Psoas muscle (tissue), 8 donors: ENCODE measurements at regions of chr3 and their contacts with region 1.

Region 1: GRCh38 chr3:142356818-142357217 is 91.0 kb downstream of the XRN1 start:
- DNase-seq: no peak
- ATAC-seq: no peak
- H3K4me3 ChIP-seq: no peak overlapping the region
- H3K27ac ChIP-seq: no peak overlapping the region
- H3K4me1 ChIP-seq: no peaks in the 10 kb centered on the region
- H3K27me3 ChIP-seq: no peaks in the 10 kb centered on the region
- CTCF ChIP-seq: no peak

Region 2: GRCh38 chr3:142394921-142395622 is 38.3 kb after region 1 on chr3:
- intact Hi-C with region 1: loop called (anchors 5 to 10 kb)
- DNase-seq: no peak
- ATAC-seq: no peak
- H3K4me3 ChIP-seq: no peak overlapping the region
- H3K27ac ChIP-seq: no peak overlapping the region
- H3K4me1 ChIP-seq: no peaks in the 10 kb centered on the region
- H3K27me3 ChIP-seq: no peaks in the 10 kb centered on the region
- CTCF ChIP-seq: no peak

Region 3: GRCh38 chr3:142530296-142530695 is 173.5 kb after region 1 on chr3:
- intact Hi-C with region 1: loop called in 1 of 2 experiments (anchors 10 kb)
- DNase-seq: no peak
- ATAC-seq: no peak
- H3K4me3 ChIP-seq: no peak overlapping the region
- H3K27ac ChIP-seq: no peak overlapping the region
- H3K4me1 ChIP-seq: no peaks in the 10 kb centered on the region
- H3K27me3 ChIP-seq: no peaks in the 10 kb centered on the region
- CTCF ChIP-seq: no peak